ENCODE measurements at regions of chr10 and their contacts with region 1.

Region 1: GRCh38 chr10:62099299-62099698 is 169.3 kb downstream of the RTKN2 start:
- DNase-seq: no peak
- ATAC-seq: no peak
- H3K4me3 ChIP-seq: no peak overlapping the region
- H3K27ac ChIP-seq: peak overlapping the region; percentile 10; the same call in 1 of the 2 replicates
- H3K4me1 ChIP-seq: peaks cover 34% of the 10 kb centered on the region
- H3K27me3 ChIP-seq: no peaks in the 10 kb centered on the region
- CTCF ChIP-seq: no peak

Region 2: GRCh38 chr10:61896854-61897661 is 202.2 kb before region 1 on chr10:
- CTCF ChIA-PET with region 1: interaction called, 11 read pairs
- POLR2A ChIA-PET with region 1: no interaction called
- in situ Hi-C with region 1: no loop called
- intact Hi-C with region 1: no loop called
- DNase-seq: peak; percentile 67
- ATAC-seq: peak; percentile 53
- H3K4me3 ChIP-seq: peak overlapping the region; percentile 19 to 64
- H3K27ac ChIP-seq: peak overlapping the region; percentile 100
- H3K4me1 ChIP-seq: peaks cover 41% of the 10 kb centered on the region
- H3K27me3 ChIP-seq: no peaks in the 10 kb centered on the region
- CTCF ChIP-seq: peak; percentile 88

Region 3: DNA sequence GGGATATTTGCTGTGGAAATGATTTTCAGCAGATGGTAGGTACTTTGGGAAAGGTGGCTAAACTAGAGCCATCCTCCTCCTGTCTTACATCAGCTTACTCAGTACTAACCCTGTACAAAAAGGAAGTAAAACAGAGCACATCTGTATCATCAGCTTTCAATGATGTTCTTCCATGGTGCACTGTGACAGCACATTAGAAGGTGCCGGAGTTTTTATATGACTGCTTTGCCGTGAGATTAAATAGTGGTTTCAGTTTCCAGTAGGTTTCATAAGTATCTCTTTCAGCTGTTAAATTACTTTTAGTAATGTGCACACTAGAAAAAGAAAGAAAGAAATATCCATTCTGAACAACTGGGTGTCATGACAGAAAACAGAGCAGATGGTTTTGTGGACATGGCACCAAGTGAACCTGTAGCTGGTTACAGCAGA is 111.3 kb before region 1 on chr10:
- CTCF ChIA-PET with region 1: no interaction called
- POLR2A ChIA-PET with region 1: no interaction called
- in situ Hi-C with region 1: no loop called
- intact Hi-C with region 1: no loop called
- DNase-seq: no peak
- ATAC-seq: no peak
- H3K4me3 ChIP-seq: no peak overlapping the region
- H3K27ac ChIP-seq: peak overlapping the region; percentile 67; the same call in 1 of the 2 replicates
- H3K4me1 ChIP-seq: peaks cover 41% of the 10 kb centered on the region
- H3K27me3 ChIP-seq: no peaks in the 10 kb centered on the region
- CTCF ChIP-seq: no peak

Region 4: DNA sequence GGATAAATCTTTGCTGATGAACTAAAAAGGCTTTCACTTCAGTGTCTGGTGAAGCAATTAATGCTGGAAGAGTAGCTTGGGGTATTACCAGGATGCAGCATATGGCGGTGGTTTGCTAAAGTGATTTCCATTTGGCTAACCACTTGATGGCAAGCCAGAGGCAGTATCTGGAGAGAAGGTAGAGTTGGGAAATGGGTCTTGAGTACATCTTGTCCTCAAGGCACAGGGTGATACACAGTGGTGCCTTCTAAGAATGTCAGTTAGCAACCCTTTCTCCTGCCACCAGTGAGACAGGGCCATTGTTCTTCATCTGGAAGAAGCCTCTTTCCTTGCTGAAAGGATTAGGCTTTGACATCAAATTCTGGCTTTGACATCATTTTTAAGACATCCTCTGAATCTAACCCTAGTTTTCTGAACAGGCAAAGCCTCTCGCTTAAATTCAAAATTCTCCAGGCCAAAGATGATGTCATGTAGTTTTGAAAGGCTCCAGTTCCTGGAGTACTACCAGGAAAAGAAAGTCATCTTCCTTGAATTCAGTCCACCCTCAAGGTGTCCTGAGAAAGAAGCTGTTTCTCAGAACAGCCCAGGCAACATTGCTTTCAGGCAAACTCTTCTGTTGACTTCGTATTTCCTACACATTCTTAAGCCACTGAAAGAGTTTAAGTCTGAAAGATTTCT is 35.4 kb before region 1 on chr10:
- CTCF ChIA-PET with region 1: no interaction called
- POLR2A ChIA-PET with region 1: interaction called, 11 read pairs
- in situ Hi-C with region 1: no loop called
- intact Hi-C with region 1: no loop called
- DNase-seq: no peak
- ATAC-seq: no peak
- H3K4me3 ChIP-seq: no peak overlapping the region
- H3K27ac ChIP-seq: no peak overlapping the region; the same call in 1 of the 2 replicates
- H3K4me1 ChIP-seq: no peaks in the 10 kb centered on the region
- H3K27me3 ChIP-seq: no peaks in the 10 kb centered on the region
- CTCF ChIP-seq: no peak

Region 5: GRCh38 chr10:62083412-62084267 is 15.7 kb before region 1 on chr10:
- CTCF ChIA-PET with region 1: interaction called, 13 read pairs
- POLR2A ChIA-PET with region 1: no interaction called
- in situ Hi-C with region 1: no loop called
- intact Hi-C with region 1: no loop called
- DNase-seq: no peak
- ATAC-seq: no peak; the same call in 1 of the 2 replicates
- H3K4me3 ChIP-seq: no peak overlapping the region
- H3K27ac ChIP-seq: peak overlapping the region; percentile 84
- H3K4me1 ChIP-seq: peaks cover 36% of the 10 kb centered on the region
- H3K27me3 ChIP-seq: no peaks in the 10 kb centered on the region
- CTCF ChIP-seq: no peak

Region 6: DNA sequence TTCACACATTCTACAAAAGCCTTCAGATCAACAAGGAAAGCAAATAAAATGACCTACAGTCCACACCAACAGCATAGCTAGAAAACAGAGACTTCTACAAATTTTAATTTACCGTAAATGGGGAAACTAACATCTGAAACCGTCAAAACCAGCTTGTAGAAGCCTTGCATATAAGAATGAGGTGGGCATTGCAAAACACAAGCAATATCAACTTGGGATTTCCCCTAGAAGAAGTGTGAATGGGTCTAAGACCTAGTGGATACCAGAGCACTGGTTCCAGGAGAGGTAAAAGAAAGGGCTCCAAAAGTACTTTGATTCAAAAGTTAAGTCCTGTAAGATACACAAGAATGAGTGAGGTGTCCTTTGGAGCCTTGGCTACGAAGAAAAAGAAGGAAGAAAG is 150.7 kb after region 1 on chr10:
- CTCF ChIA-PET with region 1: interaction called, 12 read pairs
- POLR2A ChIA-PET with region 1: no interaction called
- in situ Hi-C with region 1: no loop called
- intact Hi-C with region 1: no loop called
- DNase-seq: no peak
- ATAC-seq: no peak
- H3K4me3 ChIP-seq: no peak overlapping the region
- H3K27ac ChIP-seq: peak overlapping the region; percentile 83
- H3K4me1 ChIP-seq: peaks cover 54% of the 10 kb centered on the region
- H3K27me3 ChIP-seq: no peaks in the 10 kb centered on the region
- CTCF ChIP-seq: no peak

Region 7: DNA sequence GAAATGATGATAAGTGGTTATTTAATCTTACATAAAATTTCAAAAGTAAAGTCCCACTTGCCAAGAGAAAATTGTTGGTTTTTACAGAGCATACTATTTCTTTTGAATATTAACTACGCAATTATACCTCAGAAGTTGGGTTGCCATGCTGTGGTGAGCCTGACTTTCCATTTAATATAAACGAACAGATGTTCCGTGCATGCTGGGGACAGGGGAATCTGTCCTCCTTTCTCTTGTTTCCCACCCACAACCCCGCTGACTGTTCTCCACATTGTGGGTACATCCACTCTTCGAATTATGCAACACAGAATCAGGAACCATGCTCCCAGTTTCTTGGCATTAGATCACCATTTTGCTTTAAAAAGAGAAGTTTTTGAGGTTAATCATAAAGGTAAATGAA is 198.6 kb after region 1 on chr10:
- CTCF ChIA-PET with region 1: no interaction called
- POLR2A ChIA-PET with region 1: no interaction called
- in situ Hi-C with region 1: no loop called
- intact Hi-C with region 1: no loop called
- DNase-seq: no peak
- ATAC-seq: no peak
- H3K4me3 ChIP-seq: no peak overlapping the region
- H3K27ac ChIP-seq: no peak overlapping the region
- H3K4me1 ChIP-seq: no peaks in the 10 kb centered on the region
- H3K27me3 ChIP-seq: no peaks in the 10 kb centered on the region
- CTCF ChIP-seq: no peak

Region 8: GRCh38 chr10:62323751-62324150 is 224.5 kb after region 1 on chr10:
- CTCF ChIA-PET with region 1: no interaction called
- POLR2A ChIA-PET with region 1: no interaction called
- in situ Hi-C with region 1: no loop called
- intact Hi-C with region 1: no loop called
- DNase-seq: no peak
- ATAC-seq: no peak
- H3K4me3 ChIP-seq: no peak overlapping the region
- H3K27ac ChIP-seq: no peak overlapping the region
- H3K4me1 ChIP-seq: no peaks in the 10 kb centered on the region
- H3K27me3 ChIP-seq: no peaks in the 10 kb centered on the region
- CTCF ChIP-seq: no peak

Region 9: GRCh38 chr10:63206997-63207811 is 1107.9 kb after region 1 on chr10:
- CTCF ChIA-PET with region 1: no interaction called
- POLR2A ChIA-PET with region 1: no interaction called
- in situ Hi-C with region 1: no loop called
- intact Hi-C with region 1: no loop called
- DNase-seq: no peak
- ATAC-seq: no peak
- H3K4me3 ChIP-seq: no peak overlapping the region
- H3K27ac ChIP-seq: no peak overlapping the region
- H3K4me1 ChIP-seq: peaks cover 6% of the 10 kb centered on the region; the same call in 1 of the 2 replicates
- H3K27me3 ChIP-seq: no peaks in the 10 kb centered on the region
- CTCF ChIP-seq: no peak